GM10248 (cell line): ENCODE measurements at regions of chr1 and their contacts with region 1.

Region 1: GRCh38 chr1:56146449-56146848 is 432.9 kb downstream of the PLPP3 start:
- DNase-seq: no peak
- CTCF ChIP-seq: no peak

Region 2: GRCh38 chr1:56135069-56135863 is 11.2 kb before region 1 on chr1:
- CTCF ChIA-PET with region 1: interaction called, 16 read pairs
- POLR2A ChIA-PET with region 1: no interaction called
- DNase-seq: peak; percentile 25
- CTCF ChIP-seq: no peak